ENCODE measurements at regions of chr13 and their contacts with region 1.

Region 1: DNA sequence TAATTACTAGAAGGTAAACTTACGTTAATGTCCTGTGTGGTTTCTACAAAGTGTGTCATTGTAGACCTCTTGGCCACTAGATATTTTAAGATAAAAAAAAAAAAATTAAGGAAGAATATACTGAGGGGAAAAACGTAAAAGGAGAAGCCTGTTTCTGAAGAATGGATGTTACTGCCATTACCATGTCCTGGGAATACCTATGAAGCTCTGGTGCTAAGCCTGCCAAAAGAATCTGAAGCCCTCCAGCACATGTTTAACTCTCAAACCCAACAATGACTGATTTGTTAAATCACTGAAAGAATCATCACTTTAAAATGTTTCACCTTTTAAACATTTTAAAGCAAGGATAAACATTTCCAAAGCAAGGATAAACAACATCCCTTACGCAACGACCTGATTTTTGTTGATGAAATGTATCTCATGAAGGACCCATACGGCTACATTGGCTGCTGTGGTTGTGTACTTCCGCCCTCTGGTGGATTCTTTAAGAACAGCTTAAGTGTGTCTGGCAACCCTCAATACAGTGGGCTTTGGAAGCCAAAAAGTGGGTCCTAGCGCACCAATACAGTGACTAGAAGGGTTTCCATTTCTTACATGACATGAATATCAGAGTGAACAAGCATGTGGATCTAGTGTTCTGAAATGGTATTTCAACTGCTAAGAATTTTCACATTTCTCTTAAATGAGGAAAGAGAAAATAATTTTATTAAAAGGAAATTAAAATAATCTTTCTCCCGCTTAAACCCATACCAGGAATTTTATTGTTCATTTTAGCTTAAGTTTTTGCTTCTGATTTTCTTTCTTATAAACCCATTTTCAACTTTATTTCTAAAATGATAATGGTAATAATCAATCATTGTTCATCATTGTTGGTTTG is 74.5 kb upstream of the RAP2A start:
- DNase-seq: peak; percentile 69
- H3K4me3 ChIP-seq: no peak overlapping the region
- CTCF ChIP-seq: peak; percentile 84

Region 2: GRCh38 chr13:97030705-97031452 is 328.5 kb before region 1 on chr13:
- in situ Hi-C with region 1: loop called (anchors 25 kb)
- DNase-seq: peak; percentile 62
- H3K4me3 ChIP-seq: no peak overlapping the region
- CTCF ChIP-seq: peak; percentile 41

Measured in astrocyte of the cerebellum (primary cell).